Esophagus muscularis mucosa (tissue), 4 donors: ENCODE measurements at regions of chr14 and their contacts with region 1.

Region 1: GRCh38 chr14:90383075-90383730 is 13.6 kb upstream of the CALM1 start:
- DNase-seq: peak; percentile 100
- H3K4me3 ChIP-seq: peak overlapping the region; percentile 60 to 71 (median 70)
- H3K27ac ChIP-seq: peak overlapping the region; percentile 91 to 99 (median 97)
- H3K4me1 ChIP-seq: peaks cover 19 to 35% (median 33%) of the 10 kb centered on the region in 4 donors
- H3K27me3 ChIP-seq: no peaks in the 10 kb centered on the region
- CTCF ChIP-seq: peak in 2 of 3 experiments; percentile 11 to 14
- EP300 ChIP-seq: no peak
- POLR2A ChIP-seq: peak; percentile 92

Region 2: DNA sequence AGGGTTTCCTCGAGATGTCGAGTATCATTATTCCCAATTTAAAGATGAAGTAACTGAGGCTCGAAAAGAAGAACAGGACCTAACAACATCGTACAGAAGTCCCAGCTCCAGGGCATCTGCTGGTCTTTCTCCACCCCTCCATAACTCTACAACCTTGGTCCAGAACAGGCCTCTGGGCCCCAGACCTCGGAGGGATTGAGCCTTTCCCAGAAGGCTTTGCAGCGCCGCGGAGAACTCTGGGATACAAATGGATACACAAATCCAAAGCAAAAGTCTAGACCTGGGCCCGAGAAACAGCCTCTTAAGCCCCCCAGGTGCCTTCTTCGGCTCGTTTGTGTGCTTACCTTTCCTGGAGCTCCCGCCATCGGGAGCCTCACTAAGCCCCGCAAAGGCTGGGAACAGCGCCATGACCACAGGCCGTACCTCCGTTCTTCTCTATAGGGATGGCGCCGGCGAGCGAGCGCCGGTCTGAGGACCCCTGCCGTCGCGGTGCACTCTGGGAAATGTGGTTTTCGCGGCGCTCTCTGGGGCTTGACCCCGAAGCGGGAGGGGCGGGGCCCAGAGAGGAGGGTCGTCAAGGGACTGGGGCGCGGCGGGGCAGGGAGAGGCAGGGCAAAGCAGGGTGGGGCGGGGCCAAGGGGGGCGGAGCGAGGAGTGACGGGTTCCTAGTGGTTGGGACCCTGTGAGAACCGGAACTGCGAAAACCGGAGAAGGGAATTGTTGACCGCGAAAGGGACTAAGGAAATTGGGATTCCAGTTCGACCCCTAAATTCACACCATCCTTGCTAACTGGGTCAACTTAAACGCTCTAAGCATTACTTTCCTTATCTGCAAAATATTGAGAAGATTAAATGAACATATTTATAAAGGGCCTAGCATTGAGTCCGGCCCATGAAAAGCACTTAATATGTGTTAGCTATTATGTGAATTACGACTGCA is 51.4 kb before region 1 on chr14 and contains the start of gene NRDE2:
- intact Hi-C with region 1: loop called (anchors 2 kb)
- DNase-seq: peak; percentile 100
- H3K4me3 ChIP-seq: peak within 1 kb of the TSS; percentile 69 to 74 (median 70)
- H3K27ac ChIP-seq: peak within 1 kb of the TSS; percentile 82 to 90 (median 83)
- H3K4me1 ChIP-seq: peaks cover 11 to 22% (median 16%) of the 10 kb centered on the region in 4 donors
- H3K27me3 ChIP-seq: peaks cover 0 to 9% (median 0%) of the 10 kb centered on the region in 4 donors
- CTCF ChIP-seq: no peak
- EP300 ChIP-seq: no peak
- POLR2A ChIP-seq: no peak
- total RNA-seq, gene NRDE2: 8.0 to 14.1 (median 12.2) TPM

Region 3: GRCh38 chr14:90426663-90427062 is 43.5 kb after region 1 on chr14:
- intact Hi-C with region 1: no loop called
- DNase-seq: no peak
- H3K4me3 ChIP-seq: no peak overlapping the region
- H3K27ac ChIP-seq: no peak overlapping the region
- H3K4me1 ChIP-seq: peaks cover 6 to 22% (median 14%) of the 10 kb centered on the region in 4 donors
- H3K27me3 ChIP-seq: no peaks in the 10 kb centered on the region
- CTCF ChIP-seq: no peak
- EP300 ChIP-seq: no peak
- POLR2A ChIP-seq: no peak

Region 4: DNA sequence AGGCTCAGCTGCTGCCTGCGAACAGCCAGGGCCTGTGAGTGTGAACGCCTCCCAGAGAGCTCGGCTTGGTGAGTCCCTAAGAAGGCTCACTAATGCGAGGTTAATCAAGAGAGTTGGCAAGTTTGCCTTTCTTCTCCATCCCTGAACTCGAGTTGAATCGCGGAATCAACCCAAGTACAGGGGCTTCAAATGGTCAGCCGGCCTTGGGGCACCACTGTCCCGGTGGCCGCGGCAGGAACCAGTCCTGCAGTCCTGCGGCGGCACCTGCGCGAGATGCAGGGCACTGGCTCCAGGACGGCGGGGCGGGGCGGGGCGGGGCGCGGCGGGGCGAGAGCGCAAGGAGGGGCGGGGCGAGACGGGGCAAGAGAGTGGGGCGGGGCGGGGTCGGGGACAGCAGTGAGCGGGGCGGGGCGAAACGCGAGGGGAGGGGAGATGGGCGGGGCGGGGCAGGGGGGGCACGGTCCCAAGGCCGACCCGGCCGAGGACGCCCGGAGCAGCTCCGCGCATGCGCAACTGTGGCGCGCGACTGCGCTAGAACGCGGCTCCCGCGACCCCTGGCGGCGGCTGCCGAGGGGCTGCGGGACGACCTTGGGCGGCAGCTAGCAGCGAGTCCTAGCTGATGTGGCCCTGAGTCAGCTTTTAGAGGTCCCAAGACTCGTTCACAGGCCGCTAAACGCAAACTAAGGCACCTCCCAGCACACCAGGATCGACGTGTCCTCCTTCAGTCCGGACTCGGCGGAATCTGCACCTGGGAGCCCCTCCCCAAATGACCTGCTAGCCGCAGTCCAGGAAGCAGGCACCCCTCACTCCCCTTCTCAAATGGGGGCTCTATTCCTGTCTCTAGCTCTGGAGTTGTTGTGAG is 375.1 kb after region 1 on chr14:
- intact Hi-C with region 1: loop called (anchors 5 kb)
- DNase-seq: peak; percentile 96
- H3K4me3 ChIP-seq: peak overlapping the region; percentile 50 to 58 (median 54)
- H3K27ac ChIP-seq: peak overlapping the region; percentile 86 to 94 (median 92)
- H3K4me1 ChIP-seq: peaks cover 22 to 32% (median 24%) of the 10 kb centered on the region in 4 donors
- H3K27me3 ChIP-seq: no peaks in the 10 kb centered on the region
- CTCF ChIP-seq: peak; percentile 92 to 95 (median 92)
- EP300 ChIP-seq: no peak
- POLR2A ChIP-seq: no peak